Colonic mucosa (tissue), 4 donors: ENCODE measurements at regions of chr4 and their contacts with region 1.

Region 1: GRCh38 chr4:186936496-186937375 is 213.1 kb upstream of the FAT1 start:
- DNase-seq: no peak
- H3K4me3 ChIP-seq: no peak overlapping the region
- H3K27ac ChIP-seq: peak overlapping the region; percentile 74
- H3K4me1 ChIP-seq: peaks cover 11% of the 10 kb centered on the region
- H3K27me3 ChIP-seq: no peaks in the 10 kb centered on the region
- CTCF ChIP-seq: no peak

Region 2: DNA sequence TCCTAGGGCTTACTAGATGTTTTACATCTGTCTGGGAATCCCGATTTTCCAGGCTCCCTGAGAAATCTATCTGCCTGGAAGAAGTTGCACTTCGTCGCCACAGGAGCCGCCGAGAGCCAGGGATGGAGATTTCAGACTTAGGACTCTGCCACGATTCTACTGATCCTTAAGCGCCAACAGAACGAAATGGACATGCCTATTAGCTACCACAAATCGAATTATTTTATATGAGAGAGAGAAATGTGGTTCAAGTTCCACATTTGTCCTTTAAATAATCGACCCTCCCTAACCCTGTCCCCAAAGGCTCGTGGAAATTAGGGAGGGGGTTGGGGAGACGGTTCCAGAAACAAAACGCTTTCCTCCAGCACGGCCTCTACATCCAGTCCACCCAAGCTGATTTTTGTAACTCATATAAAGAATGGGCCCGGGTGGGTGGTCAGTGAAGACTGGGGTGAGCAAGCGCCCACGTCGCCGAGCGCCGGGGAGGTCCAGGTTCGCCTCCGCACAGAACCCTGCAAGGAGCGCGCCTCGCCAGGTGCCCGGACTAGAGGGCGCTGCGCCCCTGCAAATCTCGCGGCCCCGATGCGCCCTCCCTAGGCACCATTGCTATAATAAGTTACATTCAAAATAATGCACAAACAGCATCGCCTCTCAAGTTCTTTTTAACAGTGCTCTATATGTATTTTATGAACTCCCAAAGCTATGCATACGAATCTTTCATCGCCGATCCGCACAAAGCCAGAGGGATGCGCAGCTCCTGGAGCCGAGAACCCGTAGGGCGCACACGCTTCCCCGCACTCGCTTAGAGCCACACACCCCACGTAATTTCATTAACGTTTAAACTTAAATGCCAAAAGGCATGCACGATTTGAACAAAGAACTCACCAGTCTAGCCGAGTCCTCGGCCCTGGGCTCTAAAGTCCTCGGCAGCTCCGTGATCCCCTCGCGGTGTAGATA is 211.0 kb before region 1 on chr4:
- intact Hi-C with region 1: loop called (anchors 5 kb)
- DNase-seq: peak; percentile 87
- H3K4me3 ChIP-seq: peak overlapping the region; percentile 76
- H3K27ac ChIP-seq: peak overlapping the region; percentile 92
- H3K4me1 ChIP-seq: no peaks in the 10 kb centered on the region
- H3K27me3 ChIP-seq: no peaks in the 10 kb centered on the region
- CTCF ChIP-seq: peak; percentile 66

Region 3: DNA sequence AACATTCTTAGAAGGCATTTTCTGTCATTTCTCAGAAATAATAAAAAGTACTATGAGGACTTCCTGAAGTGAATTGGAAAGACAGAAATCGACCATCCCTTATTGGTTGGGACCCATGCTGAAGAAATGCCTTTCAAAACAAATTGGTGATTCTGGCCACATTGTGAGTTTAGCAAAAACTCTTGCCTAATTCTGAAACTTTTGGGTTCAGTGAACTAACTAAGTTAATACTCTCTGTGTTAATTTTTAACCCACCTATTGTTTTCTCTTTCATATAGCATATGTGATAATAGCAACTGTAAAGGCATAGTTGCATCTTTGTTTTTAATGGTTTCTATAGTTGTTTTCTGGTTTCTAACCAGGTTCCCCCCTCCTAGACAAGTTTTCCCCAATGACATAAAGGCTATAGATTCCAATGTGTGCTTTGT is 83.8 kb before region 1 on chr4:
- intact Hi-C with region 1: loop called (anchors 10 kb)
- DNase-seq: no peak
- H3K4me3 ChIP-seq: no peak overlapping the region
- H3K27ac ChIP-seq: peak overlapping the region; percentile 70
- H3K4me1 ChIP-seq: no peaks in the 10 kb centered on the region
- H3K27me3 ChIP-seq: no peaks in the 10 kb centered on the region
- CTCF ChIP-seq: no peak